Naive thymus-derived CD4-positive, alpha-beta T cell (primary cell): ENCODE measurements at regions of chr3 and their contacts with region 1.

Region 1: GRCh38 chr3:129934234-129935123 is 40.0 kb upstream of the TRH start:
- DNase-seq: peak in 6 of 9 donors; percentile 18 to 46 (median 26)
- ATAC-seq: peak; percentile 66
- H3K4me3 ChIP-seq: no peak overlapping the region
- H3K4me3 Mint-ChIP-seq: peak overlapping the region in 4 of 10 donors; percentile 10 to 67 (median 27)
- H3K27ac ChIP-seq: no peak overlapping the region
- H3K27ac Mint-ChIP-seq: no peak overlapping the region
- H3K4me1 ChIP-seq: peaks cover 0 to 3% of the 10 kb centered on the region in 2 donors
- H3K4me1 Mint-ChIP-seq: peaks cover 4 to 10% (median 7%) of the 10 kb centered on the region in 7 donors
- H3K27me3 ChIP-seq: no peaks in the 10 kb centered on the region
- H3K27me3 Mint-ChIP-seq: peaks cover 3 to 16% (median 4%) of the 10 kb centered on the region in 5 donors

Region 2: GRCh38 chr3:129383292-129383860 is 551.1 kb before region 1 on chr3:
- CTCF ChIA-PET with region 1: no interaction called
- POLR2A ChIA-PET with region 1: no interaction called
- intact Hi-C with region 1: loop called in 1 of 2 experiments (anchors 2 kb)
- DNase-seq: peak in 7 of 9 donors; percentile 21 to 40 (median 30)
- ATAC-seq: peak; percentile 92
- H3K4me3 ChIP-seq: no peak overlapping the region
- H3K4me3 Mint-ChIP-seq: no peak overlapping the region
- H3K27ac ChIP-seq: no peak overlapping the region
- H3K27ac Mint-ChIP-seq: peak overlapping the region in 2 of 9 donors; percentile 49 to 92
- H3K4me1 ChIP-seq: no peaks in the 10 kb centered on the region
- H3K4me1 Mint-ChIP-seq: peaks cover 0 to 4% (median 0%) of the 10 kb centered on the region in 7 donors
- H3K27me3 ChIP-seq: no peaks in the 10 kb centered on the region
- H3K27me3 Mint-ChIP-seq: no peaks in the 10 kb centered on the region

Region 3: GRCh38 chr3:129650256-129650872 is 284.1 kb before region 1 on chr3:
- CTCF ChIA-PET with region 1: interaction called, 7 read pairs
- POLR2A ChIA-PET with region 1: no interaction called
- intact Hi-C with region 1: loop called in 1 of 2 experiments (anchors 1 kb)
- DNase-seq: peak in 8 of 9 donors; percentile 8 to 57 (median 42)
- ATAC-seq: peak; percentile 62
- H3K4me3 ChIP-seq: no peak overlapping the region
- H3K4me3 Mint-ChIP-seq: no peak overlapping the region
- H3K27ac ChIP-seq: no peak overlapping the region
- H3K27ac Mint-ChIP-seq: peak overlapping the region in 2 of 9 donors; percentile 12 to 38
- H3K4me1 ChIP-seq: no peaks in the 10 kb centered on the region
- H3K4me1 Mint-ChIP-seq: peaks cover 0 to 4% (median 1%) of the 10 kb centered on the region in 7 donors
- H3K27me3 ChIP-seq: no peaks in the 10 kb centered on the region
- H3K27me3 Mint-ChIP-seq: peaks cover 0 to 4% (median 0%) of the 10 kb centered on the region in 5 donors

Region 4: GRCh38 chr3:129908381-129908780 is 26.1 kb before region 1 on chr3:
- CTCF ChIA-PET with region 1: no interaction called
- POLR2A ChIA-PET with region 1: no interaction called
- intact Hi-C with region 1: no loop called
- DNase-seq: no peak
- ATAC-seq: no peak
- H3K4me3 ChIP-seq: no peak overlapping the region
- H3K4me3 Mint-ChIP-seq: no peak overlapping the region
- H3K27ac ChIP-seq: no peak overlapping the region
- H3K27ac Mint-ChIP-seq: no peak overlapping the region
- H3K4me1 ChIP-seq: no peaks in the 10 kb centered on the region
- H3K4me1 Mint-ChIP-seq: no peaks in the 10 kb centered on the region
- H3K27me3 ChIP-seq: no peaks in the 10 kb centered on the region
- H3K27me3 Mint-ChIP-seq: peaks cover 0 to 4% (median 0%) of the 10 kb centered on the region in 5 donors